ENCODE measurements at regions of chr1 and their contacts with region 1.

Region 1: DNA sequence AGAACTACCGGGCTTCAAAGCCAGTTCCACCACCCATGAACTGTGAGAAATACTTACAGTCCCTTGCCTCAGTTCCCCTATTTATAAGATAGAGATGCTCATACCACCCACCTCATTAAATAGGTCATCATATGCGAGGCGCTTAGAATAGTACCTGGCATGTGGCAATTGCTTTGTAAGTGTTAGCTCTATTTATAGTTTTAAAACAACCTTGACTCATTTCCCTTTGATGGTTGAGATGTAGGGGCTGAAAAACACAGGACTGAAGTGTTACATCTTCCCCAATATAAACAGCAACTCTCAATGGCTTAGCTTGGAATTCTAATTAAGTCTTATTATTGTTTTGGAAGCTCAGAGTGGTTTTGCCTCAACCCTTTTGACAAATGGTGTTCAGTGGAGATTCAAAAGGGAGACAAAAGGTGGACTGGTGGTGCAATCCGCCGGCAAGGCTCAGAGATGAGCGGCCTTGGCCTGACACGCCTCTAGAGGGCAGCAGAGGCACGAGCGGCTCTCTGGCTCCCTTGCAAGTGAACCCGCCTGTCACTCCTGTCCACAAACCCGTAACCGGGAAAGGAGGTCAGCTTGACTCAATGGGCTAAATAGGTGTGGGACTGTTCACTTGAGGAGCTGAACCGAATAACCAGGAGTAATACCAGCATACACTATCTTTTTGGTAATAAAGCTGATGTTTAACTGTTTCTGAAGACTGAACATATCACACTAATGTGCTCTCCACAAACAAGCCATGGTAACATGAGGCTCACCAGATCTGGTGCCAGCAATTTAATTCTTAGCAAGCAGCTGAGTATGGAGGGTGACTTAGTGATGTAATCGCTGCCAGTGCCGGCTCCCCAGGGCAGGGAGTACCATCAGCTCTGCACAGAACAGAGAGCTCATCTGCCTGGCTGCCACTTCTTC is 19.5 kb upstream of the SMYD2 start:
- DNase-seq: peak; percentile 53 to 79
- ATAC-seq: peak; percentile 96 to 99
- H3K4me3 ChIP-seq: no peak overlapping the region
- H3K27ac ChIP-seq: 0 out of 6 replicates have a peak overlapping the region, but pooled peaks of 1 of the 2 experiments have one; percentile 39
- H3K4me1 ChIP-seq: peaks cover 13% of the 10 kb centered on the region; the same call in 2 of the 3 replicates
- CTCF ChIP-seq: peak; percentile 90
- EP300 ChIP-seq: no peak
- POLR2A ChIP-seq: no peak
- RAD21 ChIP-seq: peak; percentile 84 to 86

Region 2: GRCh38 chr1:214213136-214213535 is 48.3 kb before region 1 on chr1:
- CTCF ChIA-PET with region 1: interaction called, 43 read pairs
- POLR2A ChIA-PET with region 1: no interaction called
- DNase-seq: peak; percentile 52 to 84
- ATAC-seq: peak; percentile 94 to 95
- H3K4me3 ChIP-seq: no peak overlapping the region
- H3K27ac ChIP-seq: peak overlapping the region; percentile 74
- H3K4me1 ChIP-seq: peaks cover 52% of the 10 kb centered on the region
- CTCF ChIP-seq: no peak
- EP300 ChIP-seq: peak in 1 of 2 experiments; percentile 36; a peak in 1 of 5 replicates
- POLR2A ChIP-seq: no peak
- RAD21 ChIP-seq: no peak

Region 3: DNA sequence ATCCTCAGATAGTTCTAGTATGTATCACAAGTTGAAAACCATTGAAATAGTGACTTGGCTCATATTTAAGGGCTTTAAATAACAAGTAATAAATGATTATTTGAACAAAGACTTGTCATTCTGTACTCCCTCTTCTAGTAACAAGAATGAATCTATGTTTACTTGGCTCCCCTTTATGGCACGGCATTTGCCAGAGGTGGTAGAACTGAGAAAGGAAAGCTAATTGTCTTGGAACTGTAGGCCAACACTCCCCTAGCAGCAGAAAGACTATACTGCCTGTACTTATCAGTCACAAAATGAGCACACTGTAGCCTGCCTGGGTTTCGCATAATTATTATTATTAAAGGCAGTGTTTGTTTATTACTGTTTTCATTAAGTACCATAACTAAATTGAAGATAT is 10.1 kb before region 1 on chr1:
- CTCF ChIA-PET with region 1: interaction called, 33 read pairs
- POLR2A ChIA-PET with region 1: no interaction called
- DNase-seq: no peak
- ATAC-seq: no peak
- H3K4me3 ChIP-seq: no peak overlapping the region
- H3K27ac ChIP-seq: no peak overlapping the region
- H3K4me1 ChIP-seq: no peaks in the 10 kb centered on the region
- CTCF ChIP-seq: no peak
- EP300 ChIP-seq: no peak
- POLR2A ChIP-seq: no peak
- RAD21 ChIP-seq: no peak

Region 4: DNA sequence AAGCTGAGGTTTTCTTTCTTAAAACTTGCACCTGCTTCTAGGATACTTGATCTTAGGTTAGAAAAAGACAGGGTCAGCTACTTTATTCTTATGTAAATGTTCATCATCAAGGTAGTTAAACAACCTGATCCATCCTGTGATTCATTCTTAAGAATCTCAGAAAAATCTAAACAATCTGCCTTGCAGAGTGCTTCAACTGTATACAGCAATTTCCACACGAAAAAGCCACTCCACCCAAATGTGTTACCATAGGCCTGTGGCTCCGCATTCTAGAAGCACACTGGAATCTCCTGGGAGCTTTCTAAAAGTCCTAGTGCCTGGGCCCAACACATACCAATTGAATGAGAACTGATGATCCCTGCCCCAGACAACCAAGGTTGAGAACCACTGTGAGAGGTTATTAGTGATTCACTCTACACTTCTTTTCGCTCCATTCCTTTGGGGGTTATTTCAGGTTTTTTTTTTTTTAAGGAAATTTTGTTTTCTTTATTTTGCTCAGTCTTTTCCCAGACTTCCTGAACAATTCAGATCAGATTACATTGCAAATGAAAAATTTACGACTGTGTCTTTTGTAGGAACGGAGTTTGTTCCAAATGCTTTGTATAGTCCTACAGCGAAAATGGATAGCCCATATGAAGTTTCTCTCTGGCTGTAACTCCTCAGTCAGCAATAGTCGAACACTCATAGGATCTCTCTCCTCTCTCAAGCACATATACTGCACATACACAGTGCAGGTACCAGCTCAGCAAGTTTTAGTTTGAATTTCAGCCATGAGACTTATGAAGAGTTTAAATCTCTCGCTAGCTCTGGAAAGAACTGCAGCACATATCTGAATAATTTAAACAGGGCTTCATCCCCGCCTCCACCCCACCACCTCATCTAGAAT is 35.6 kb after region 1 on chr1:
- CTCF ChIA-PET with region 1: interaction called, 16 read pairs
- POLR2A ChIA-PET with region 1: no interaction called
- DNase-seq: no peak
- ATAC-seq: peak in 1 of 2 experiments; percentile 46; a peak in 2 of 6 replicates
- H3K4me3 ChIP-seq: no peak overlapping the region
- H3K27ac ChIP-seq: no peak overlapping the region
- H3K4me1 ChIP-seq: peaks cover 9% of the 10 kb centered on the region; the same call in 1 of the 3 replicates
- CTCF ChIP-seq: no peak
- EP300 ChIP-seq: no peak
- POLR2A ChIP-seq: no peak
- RAD21 ChIP-seq: no peak

Region 5: GRCh38 chr1:214337511-214337910 is 76.0 kb after region 1 on chr1:
- CTCF ChIA-PET with region 1: interaction called, 251 read pairs
- POLR2A ChIA-PET with region 1: no interaction called
- DNase-seq: peak in 1 of 2 experiments; percentile 23
- ATAC-seq: no peak
- H3K4me3 ChIP-seq: no peak overlapping the region
- H3K27ac ChIP-seq: no peak overlapping the region
- H3K4me1 ChIP-seq: no peaks in the 10 kb centered on the region
- CTCF ChIP-seq: no peak
- EP300 ChIP-seq: no peak
- POLR2A ChIP-seq: no peak
- RAD21 ChIP-seq: no peak

Region 6: GRCh38 chr1:214506972-214507482 is 245.6 kb after region 1 on chr1:
- CTCF ChIA-PET with region 1: no interaction called
- POLR2A ChIA-PET with region 1: no interaction called
- DNase-seq: peak; percentile 57 to 70
- ATAC-seq: peak; percentile 82 to 89
- H3K4me3 ChIP-seq: 0 out of 3 replicates have a peak overlapping the region, but pooled peaks have one; percentile 6
- H3K27ac ChIP-seq: peak overlapping the region; percentile 23 to 78; a peak in 4 of 6 replicates
- H3K4me1 ChIP-seq: peaks cover 50% of the 10 kb centered on the region
- CTCF ChIP-seq: no peak
- EP300 ChIP-seq: 0 out of 5 replicates have a peak, but pooled peaks of 1 of the 2 experiments have one; percentile 27
- POLR2A ChIP-seq: no peak
- RAD21 ChIP-seq: no peak

Region 7: DNA sequence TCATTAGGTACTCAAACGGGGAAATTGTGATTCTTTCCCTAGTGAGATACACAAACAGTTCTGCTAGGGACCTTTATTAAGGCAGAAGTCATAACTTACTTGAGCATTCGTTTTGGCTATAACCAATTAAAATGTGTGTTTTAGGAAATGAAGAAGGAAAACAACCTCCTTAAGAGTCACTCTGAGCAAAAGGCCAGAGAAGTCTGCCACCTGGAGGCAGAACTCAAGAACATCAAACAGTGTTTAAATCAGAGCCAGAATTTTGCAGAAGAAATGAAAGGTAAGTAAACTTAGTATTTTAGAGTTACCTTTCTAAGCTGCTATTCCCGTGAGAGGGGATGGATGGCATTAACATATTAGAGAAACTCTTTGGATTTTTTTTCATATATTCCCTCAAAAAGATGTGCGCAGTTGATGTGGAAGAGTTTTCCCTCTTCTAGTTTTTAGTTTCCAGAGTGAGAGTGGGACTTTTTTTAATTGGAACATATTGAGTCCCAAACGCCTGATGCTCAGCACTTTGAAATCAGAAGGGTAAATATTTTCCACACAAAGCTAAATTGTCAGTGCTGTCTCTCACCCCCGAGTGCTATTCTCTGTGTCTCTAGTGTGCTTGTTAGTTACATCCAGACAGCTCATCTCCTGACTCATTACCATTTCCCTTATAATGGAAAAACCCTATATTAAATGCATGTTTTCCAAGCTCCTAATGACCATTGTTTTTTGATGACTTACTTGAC is 376.4 kb after region 1 on chr1:
- CTCF ChIA-PET with region 1: interaction called, 10 read pairs
- POLR2A ChIA-PET with region 1: no interaction called
- DNase-seq: peak; percentile 43 to 58
- ATAC-seq: peak; percentile 72 to 84; a peak in 4 of 6 replicates
- H3K4me3 ChIP-seq: no peak overlapping the region
- H3K27ac ChIP-seq: no peak overlapping the region
- H3K4me1 ChIP-seq: no peaks in the 10 kb centered on the region
- CTCF ChIP-seq: peak; percentile 78
- EP300 ChIP-seq: no peak
- POLR2A ChIP-seq: no peak
- RAD21 ChIP-seq: peak; percentile 58 to 61

Measured in A549 (cell line).